Lower leg skin (tissue), 4 donors: ENCODE measurements at regions of chr3 and their contacts with region 1.

Region 1: GRCh38 chr3:123660900-123661299 is 76.0 kb upstream of the HACD2 start:
- DNase-seq: peak; percentile 77 to 93
- H3K4me3 ChIP-seq: no peak overlapping the region
- CTCF ChIP-seq: no peak
- POLR2A ChIP-seq: no peak

Region 2: DNA sequence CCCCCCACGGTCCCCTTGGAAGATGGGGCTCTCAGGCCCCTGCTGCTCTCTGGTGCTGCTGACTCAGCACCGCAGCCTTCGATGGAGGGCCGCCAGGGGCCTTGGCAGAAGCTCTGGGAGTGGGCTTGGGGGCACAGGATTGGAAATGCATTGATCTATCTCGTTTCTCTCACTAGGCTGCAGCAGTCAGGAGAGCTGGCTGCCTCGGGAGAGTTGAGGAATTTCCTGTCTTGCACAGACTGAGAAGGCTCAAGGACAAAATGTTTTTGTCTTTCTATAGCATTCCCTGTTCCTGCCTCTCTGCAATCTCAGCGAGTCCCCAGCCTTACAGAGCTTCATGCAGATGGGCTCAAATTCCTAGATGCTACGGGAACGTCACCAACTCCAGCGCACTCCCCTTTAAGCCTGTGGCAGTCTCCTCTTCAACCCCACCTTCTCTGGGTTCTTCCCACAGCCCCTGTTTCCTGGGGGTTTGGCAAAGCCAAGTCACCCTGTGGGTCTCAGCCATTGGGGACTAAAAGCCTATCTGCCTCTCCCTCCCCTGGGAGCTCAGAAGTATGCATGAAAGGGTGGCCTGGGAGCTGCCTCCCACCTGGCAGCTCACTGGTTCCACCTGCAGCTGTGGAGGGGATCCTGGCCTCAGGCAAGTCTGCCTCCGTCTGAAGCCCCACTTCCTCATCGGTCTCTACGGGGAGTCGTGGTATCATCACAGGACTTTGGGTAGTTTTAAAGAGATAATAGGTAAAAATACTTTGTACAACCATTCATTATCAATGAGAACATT is 51.4 kb after region 1 on chr3:
- intact Hi-C with region 1: loop called (anchors 2 kb)
- DNase-seq: no peak
- H3K4me3 ChIP-seq: no peak overlapping the region
- CTCF ChIP-seq: no peak
- POLR2A ChIP-seq: no peak

Region 3: GRCh38 chr3:124007186-124007585 is 346.3 kb after region 1 on chr3:
- intact Hi-C with region 1: no loop called
- DNase-seq: no peak
- H3K4me3 ChIP-seq: no peak overlapping the region
- CTCF ChIP-seq: no peak
- POLR2A ChIP-seq: no peak